GM13976 (cell line): ENCODE measurements at regions of chr14 and their contacts with region 1.

Region 1: DNA sequence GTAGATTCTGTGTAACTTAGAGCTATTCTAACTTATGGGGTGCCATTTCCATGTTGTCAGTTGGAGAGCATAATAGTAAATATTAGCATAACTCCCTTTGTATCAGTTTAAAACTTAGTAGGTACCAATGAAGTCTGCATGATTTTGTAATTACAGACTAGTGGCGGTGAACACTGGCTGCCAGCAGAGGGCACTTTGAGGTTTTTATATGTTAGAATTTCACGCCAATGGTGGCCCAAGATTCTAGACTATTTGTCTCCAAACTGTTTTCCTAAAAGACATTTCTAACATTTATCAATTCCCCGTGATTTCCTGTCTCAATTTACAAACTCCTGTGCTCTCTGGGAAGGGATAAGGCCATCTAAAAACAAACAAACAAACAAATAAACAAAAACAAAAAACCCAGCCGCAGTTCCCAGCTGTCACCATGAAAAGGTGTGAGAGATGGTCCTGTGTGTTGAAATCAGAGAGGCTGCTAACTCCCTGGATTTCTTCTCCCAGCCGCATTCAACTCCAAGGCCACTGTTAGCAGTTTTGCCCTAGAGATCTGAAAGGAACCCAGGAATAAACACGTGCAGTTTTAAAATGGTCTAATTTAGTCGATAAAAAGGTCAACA is 57.6 kb downstream of the BRMS1L start:
- DNase-seq: peak; percentile 45
- CTCF ChIP-seq: peak; percentile 66

Region 2: GRCh38 chr14:36070031-36070719 is 186.4 kb after region 1 on chr14:
- in situ Hi-C with region 1: loop called (anchors 10 kb)
- DNase-seq: peak; percentile 56
- CTCF ChIP-seq: peak; percentile 65

Region 3: DNA sequence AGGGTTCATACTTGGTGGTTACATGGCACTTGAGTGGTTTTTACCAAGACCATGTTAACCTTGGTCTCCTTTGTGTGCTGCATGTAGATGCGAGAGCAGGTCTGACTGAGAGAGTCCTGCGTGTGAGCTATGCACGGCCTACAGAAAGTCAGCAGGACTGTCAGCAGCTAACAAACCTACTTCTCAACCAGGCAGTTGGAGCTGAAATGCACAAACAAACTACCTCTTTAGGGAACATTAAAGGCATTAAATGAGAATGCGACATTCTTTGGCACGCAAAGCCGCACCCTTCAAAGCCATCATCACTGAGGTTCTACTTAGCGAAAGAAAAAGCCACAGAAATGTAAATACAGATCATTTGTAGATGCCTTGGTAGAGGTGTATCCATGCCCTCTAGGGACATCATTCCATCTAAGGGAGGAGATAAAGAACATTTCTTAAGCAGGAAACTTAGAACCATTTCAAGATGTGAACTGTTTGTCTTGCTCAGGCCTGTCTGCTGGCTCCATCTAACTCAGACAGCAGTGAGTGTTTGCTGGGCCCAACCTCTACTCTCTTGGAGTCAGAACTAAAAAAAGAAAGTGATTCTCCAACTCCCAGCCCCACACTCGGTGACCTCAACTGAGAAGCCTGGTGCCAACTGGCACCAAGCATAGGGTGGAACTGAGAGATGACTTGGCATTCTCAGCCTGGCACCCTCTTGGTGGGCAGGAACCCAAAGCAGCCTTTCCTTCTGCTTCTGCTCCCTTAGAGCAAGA is 500.1 kb after region 1 on chr14:
- in situ Hi-C with region 1: loop called (anchors 25 kb)
- DNase-seq: no peak
- CTCF ChIP-seq: no peak

Region 4: GRCh38 chr14:36553656-36554260 is 670.0 kb after region 1 on chr14:
- in situ Hi-C with region 1: loop called (anchors 25 kb)
- DNase-seq: peak; percentile 42
- CTCF ChIP-seq: peak; percentile 22